HCT116 (cell line): ENCODE measurements at regions of chr13 and their contacts with region 1.

Region 1: GRCh38 chr13:19661126-19661525 is 27.7 kb downstream of the MPHOSPH8 start:
- DNase-seq: no peak
- ATAC-seq: no peak
- H3K4me3 ChIP-seq: no peak overlapping the region
- H3K27ac ChIP-seq: no peak overlapping the region
- H3K4me1 ChIP-seq: no peaks in the 10 kb centered on the region
- H3K27me3 ChIP-seq: no peaks in the 10 kb centered on the region
- CTCF ChIP-seq: no peak
- POLR2A ChIP-seq: no peak
- RAD21 ChIP-seq: no peak

Region 2: GRCh38 chr13:19681517-19681916 is 20.4 kb after region 1 on chr13:
- CTCF ChIA-PET with region 1: no interaction called
- POLR2A ChIA-PET with region 1: no interaction called
- RAD21 ChIA-PET with region 1: no interaction called
- intact Hi-C with region 1: loop called (anchors 2 kb)
- DNase-seq: no peak
- ATAC-seq: no peak
- H3K4me3 ChIP-seq: no peak overlapping the region
- H3K27ac ChIP-seq: no peak overlapping the region
- H3K4me1 ChIP-seq: no peaks in the 10 kb centered on the region
- H3K27me3 ChIP-seq: no peaks in the 10 kb centered on the region
- CTCF ChIP-seq: no peak
- POLR2A ChIP-seq: no peak
- RAD21 ChIP-seq: no peak

Region 3: GRCh38 chr13:19737844-19738557 is 76.9 kb after region 1 on chr13:
- CTCF ChIA-PET with region 1: no interaction called
- POLR2A ChIA-PET with region 1: no interaction called
- RAD21 ChIA-PET with region 1: no interaction called
- intact Hi-C with region 1: no loop called
- DNase-seq: no peak
- ATAC-seq: no peak
- H3K4me3 ChIP-seq: no peak overlapping the region
- H3K27ac ChIP-seq: no peak overlapping the region
- H3K4me1 ChIP-seq: peaks cover 0 to 5% of the 10 kb centered on the region in 2 experiments; a peak in 1 of 4 replicates
- H3K27me3 ChIP-seq: no peaks in the 10 kb centered on the region
- CTCF ChIP-seq: no peak
- POLR2A ChIP-seq: no peak
- RAD21 ChIP-seq: no peak

Region 4: DNA sequence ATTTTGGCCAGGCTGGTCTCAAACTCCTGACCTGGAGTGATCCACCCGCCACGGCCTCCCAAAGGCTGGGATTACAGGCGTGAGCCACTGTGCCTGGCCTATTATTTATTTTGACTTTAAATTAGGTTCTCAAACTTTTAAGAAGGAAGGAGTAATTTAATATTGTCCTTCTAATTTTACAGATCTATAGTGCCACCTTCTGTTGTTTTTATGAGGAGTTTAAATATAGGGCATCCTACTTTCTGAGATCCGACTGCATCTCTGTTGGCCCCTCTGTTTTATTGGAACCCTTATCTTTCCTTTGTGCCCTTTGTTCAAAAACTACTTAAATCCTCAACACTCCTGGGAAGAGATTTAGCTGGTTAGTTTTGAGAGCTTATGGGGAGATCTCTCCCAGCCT is 227.7 kb after region 1 on chr13:
- CTCF ChIA-PET with region 1: no interaction called
- POLR2A ChIA-PET with region 1: no interaction called
- RAD21 ChIA-PET with region 1: no interaction called
- intact Hi-C with region 1: no loop called
- DNase-seq: no peak
- ATAC-seq: peak; percentile 70
- H3K4me3 ChIP-seq: no peak overlapping the region
- H3K27ac ChIP-seq: no peak overlapping the region
- H3K4me1 ChIP-seq: no peaks in the 10 kb centered on the region
- H3K27me3 ChIP-seq: no peaks in the 10 kb centered on the region
- CTCF ChIP-seq: peak in 2 of 3 experiments; percentile 5 to 29; a peak in 2 of 6 replicates
- POLR2A ChIP-seq: no peak
- RAD21 ChIP-seq: peak; percentile 40

Region 5: GRCh38 chr13:19952850-19953249 is 291.7 kb after region 1 on chr13:
- CTCF ChIA-PET with region 1: no interaction called
- POLR2A ChIA-PET with region 1: no interaction called
- RAD21 ChIA-PET with region 1: no interaction called
- intact Hi-C with region 1: no loop called
- DNase-seq: no peak
- ATAC-seq: no peak
- H3K4me3 ChIP-seq: no peak overlapping the region
- H3K27ac ChIP-seq: no peak overlapping the region
- H3K4me1 ChIP-seq: peaks cover 1 to 6% of the 10 kb centered on the region in 2 experiments; a peak in 3 of 4 replicates
- H3K27me3 ChIP-seq: no peaks in the 10 kb centered on the region
- CTCF ChIP-seq: no peak
- POLR2A ChIP-seq: no peak
- RAD21 ChIP-seq: no peak